WTC11 (cell line): ENCODE measurements at regions of chr1 and their contacts with region 1.

Region 1: GRCh38 chr1:86753700-86754099 is 49.3 kb downstream of the SH3GLB1 start:
- DNase-seq: no peak
- ATAC-seq: peak; percentile 18
- H3K4me3 Mint-ChIP-seq: no peak overlapping the region
- H3K27ac Mint-ChIP-seq: no peak overlapping the region
- H3K4me1 Mint-ChIP-seq: peaks cover 26% of the 10 kb centered on the region
- H3K27me3 Mint-ChIP-seq: no peaks in the 10 kb centered on the region
- CTCF ChIP-seq: no peak

Region 2: GRCh38 chr1:86741947-86742572 is 11.6 kb before region 1 on chr1:
- CTCF ChIA-PET with region 1: interaction called, 23 read pairs
- POLR2A ChIA-PET with region 1: interaction called, 3 read pairs
- DNase-seq: no peak
- ATAC-seq: no peak
- H3K4me3 Mint-ChIP-seq: no peak overlapping the region
- H3K27ac Mint-ChIP-seq: no peak overlapping the region
- H3K4me1 Mint-ChIP-seq: no peaks in the 10 kb centered on the region
- H3K27me3 Mint-ChIP-seq: no peaks in the 10 kb centered on the region
- CTCF ChIP-seq: peak; percentile 76